Activated CD8-positive, alpha-beta memory T cell treated with anti-CD3 and anti-CD28 coated beads, Interleukin-2, amount 10 ng/mL, durations not matched to agents 7 days and 5 days (primary cell): ENCODE measurements at regions of chr16 and their contacts with region 1.

Region 1: DNA sequence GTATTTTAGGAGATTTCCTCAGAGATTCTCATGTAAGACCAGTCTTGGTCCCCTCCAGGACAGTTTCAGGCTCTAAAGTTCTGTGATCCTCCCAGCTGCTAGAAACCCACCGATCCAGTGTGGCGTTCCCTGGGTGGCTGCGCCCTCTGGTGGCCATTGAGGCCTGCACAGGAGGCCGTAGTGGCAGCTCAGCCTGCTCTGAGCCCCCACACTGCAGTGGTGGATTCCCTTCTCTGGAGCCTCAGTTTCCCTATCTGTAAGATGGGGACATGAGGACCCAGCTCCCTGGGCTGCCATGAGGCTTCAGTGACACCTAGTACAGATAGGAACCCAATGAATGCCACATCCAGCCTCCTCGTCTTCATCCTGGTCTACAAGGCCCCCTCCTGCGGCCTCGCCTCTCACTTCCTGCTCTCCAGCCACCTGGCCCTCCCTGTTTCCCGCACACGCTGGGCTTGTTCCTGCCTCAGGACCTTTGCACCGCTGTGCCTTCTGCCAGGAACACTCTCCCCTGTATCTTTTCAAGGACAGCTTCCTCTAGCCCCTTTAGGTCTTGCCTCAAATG is 16.5 kb downstream of the CCDC102A start:
- DNase-seq: peak; percentile 86
- ATAC-seq: peak; percentile 96
- H3K4me3 Mint-ChIP-seq: no peak overlapping the region
- H3K27ac Mint-ChIP-seq: peak overlapping the region; percentile 8
- H3K4me1 Mint-ChIP-seq: peaks cover 11% of the 10 kb centered on the region
- H3K27me3 Mint-ChIP-seq: no peaks in the 10 kb centered on the region

Region 2: GRCh38 chr16:57416122-57416509 is 103.8 kb before region 1 on chr16:
- CTCF ChIA-PET with region 1: interaction called, 74 read pairs
- DNase-seq: no peak
- ATAC-seq: no peak
- H3K4me3 Mint-ChIP-seq: no peak overlapping the region
- H3K27ac Mint-ChIP-seq: no peak overlapping the region
- H3K4me1 Mint-ChIP-seq: peaks cover 19% of the 10 kb centered on the region
- H3K27me3 Mint-ChIP-seq: no peaks in the 10 kb centered on the region

Region 3: DNA sequence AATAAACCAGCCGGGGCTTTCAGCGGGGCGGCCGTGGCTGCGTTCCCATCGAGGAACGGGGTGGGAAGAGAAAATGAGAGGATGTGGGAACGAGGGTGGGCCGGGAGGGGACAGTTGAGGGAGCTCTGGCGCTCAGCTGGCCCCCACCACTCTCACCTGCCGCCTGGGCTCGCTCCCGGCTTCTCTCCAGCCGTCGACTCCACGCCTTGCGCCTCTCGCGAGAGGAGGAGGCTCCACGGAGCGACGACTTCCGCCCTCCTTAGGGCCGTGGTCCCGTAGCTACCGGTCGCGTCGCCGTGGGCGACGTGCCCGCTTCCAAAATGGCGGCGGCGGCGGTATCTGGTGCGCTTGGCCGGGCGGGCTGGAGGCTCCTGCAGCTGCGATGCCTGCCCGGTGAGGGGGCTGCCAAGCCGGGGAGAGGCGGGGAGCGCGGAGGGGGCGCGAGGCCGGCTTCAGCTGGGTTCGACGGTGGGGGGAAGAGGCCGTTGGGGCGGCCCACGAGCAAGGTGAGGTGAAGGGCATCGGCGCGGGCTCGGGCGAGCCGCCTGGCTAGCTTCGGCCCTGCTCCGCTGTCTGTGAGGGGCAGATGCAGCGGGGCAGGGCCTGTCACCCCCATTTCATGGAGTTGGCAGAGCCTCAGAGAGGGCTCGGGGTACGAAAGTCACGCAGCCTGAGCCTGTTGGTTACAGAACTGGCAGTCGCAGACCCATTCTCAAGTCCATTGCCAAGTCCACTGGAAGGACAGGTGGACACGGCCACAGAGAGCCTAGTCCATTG is 72.5 kb before region 1 on chr16 and contains the starts of genes CIAPIN1 and COQ9:
- CTCF ChIA-PET with region 1: interaction called, 21 read pairs
- DNase-seq: peak; percentile 97
- ATAC-seq: peak; percentile 100
- H3K4me3 Mint-ChIP-seq: peak within 1 kb of the TSS; percentile 94
- H3K27ac Mint-ChIP-seq: peak within 1 kb of the TSS; percentile 86
- H3K4me1 Mint-ChIP-seq: peaks cover 37% of the 10 kb centered on the region
- H3K27me3 Mint-ChIP-seq: no peaks in the 10 kb centered on the region
- total RNA-seq, gene CIAPIN1: 46.5 to 62.5 TPM
- total RNA-seq, gene COQ9: 36.8 to 43.1 TPM

Region 4: DNA sequence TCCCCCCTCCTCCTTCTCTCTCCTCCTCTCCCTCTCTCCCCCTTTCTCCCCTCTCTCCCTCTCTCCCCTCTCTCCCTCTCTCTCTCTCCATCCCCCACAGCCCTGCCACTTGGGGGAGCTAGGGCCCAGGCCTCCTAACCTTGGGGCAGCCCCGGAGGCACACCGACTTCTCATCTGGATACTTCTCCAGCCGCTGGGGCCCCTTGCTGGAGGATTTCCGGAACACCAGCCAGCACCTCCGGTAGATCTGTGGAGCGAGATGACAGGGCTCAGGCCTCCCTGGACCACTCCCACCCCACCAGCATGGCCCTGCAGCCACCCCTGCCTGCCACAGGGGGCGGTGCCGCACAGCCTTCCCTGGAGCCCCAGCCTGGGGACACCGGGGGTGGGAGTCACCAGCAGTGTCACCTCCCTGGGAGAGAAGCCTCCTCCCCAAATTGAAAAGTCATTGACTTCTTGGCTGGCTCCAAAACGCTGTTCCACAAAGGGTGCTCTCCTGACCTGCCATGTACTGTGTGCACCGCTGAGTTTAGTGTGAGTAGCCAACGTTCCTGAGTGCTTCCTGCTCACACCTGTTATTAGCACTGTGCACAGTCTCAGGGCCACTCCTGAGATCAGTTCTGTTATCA is 44.1 kb before region 1 on chr16:
- CTCF ChIA-PET with region 1: interaction called, 22 read pairs
- DNase-seq: peak; percentile 93
- ATAC-seq: peak; percentile 99
- H3K4me3 Mint-ChIP-seq: peak overlapping the region; percentile 45
- H3K27ac Mint-ChIP-seq: peak overlapping the region; percentile 73
- H3K4me1 Mint-ChIP-seq: peaks cover 16% of the 10 kb centered on the region
- H3K27me3 Mint-ChIP-seq: no peaks in the 10 kb centered on the region

Region 5: DNA sequence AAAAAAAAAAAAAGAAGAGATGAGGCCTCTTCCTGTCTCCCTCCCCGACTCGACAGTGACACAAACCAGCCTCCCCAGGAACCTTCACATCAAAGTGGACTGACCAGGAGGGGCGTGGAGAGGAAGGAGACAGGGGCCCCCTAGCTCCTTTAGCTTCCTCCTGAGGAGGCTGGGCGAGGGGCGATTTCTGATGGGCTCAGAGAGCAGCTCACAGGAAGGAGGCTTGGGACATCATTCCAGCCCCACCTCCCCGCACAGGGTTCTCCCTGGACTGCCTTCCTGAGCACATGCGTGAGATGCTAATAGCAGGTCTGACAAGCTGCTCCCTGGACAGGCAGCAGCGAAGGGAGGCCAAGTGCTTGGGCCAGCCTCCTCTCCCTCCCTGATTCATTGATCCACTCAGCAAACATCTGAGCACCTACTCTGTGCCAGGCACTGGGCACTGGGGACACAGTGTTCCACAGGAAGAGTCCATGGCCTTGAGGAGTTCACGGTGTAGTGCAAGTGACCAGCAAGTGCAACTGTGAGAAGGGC is 19.2 kb before region 1 on chr16:
- CTCF ChIA-PET with region 1: interaction called, 13 read pairs
- DNase-seq: peak; percentile 54
- ATAC-seq: peak; percentile 71
- H3K4me3 Mint-ChIP-seq: no peak overlapping the region
- H3K27ac Mint-ChIP-seq: no peak overlapping the region
- H3K4me1 Mint-ChIP-seq: peaks cover 12% of the 10 kb centered on the region
- H3K27me3 Mint-ChIP-seq: no peaks in the 10 kb centered on the region

Region 6: DNA sequence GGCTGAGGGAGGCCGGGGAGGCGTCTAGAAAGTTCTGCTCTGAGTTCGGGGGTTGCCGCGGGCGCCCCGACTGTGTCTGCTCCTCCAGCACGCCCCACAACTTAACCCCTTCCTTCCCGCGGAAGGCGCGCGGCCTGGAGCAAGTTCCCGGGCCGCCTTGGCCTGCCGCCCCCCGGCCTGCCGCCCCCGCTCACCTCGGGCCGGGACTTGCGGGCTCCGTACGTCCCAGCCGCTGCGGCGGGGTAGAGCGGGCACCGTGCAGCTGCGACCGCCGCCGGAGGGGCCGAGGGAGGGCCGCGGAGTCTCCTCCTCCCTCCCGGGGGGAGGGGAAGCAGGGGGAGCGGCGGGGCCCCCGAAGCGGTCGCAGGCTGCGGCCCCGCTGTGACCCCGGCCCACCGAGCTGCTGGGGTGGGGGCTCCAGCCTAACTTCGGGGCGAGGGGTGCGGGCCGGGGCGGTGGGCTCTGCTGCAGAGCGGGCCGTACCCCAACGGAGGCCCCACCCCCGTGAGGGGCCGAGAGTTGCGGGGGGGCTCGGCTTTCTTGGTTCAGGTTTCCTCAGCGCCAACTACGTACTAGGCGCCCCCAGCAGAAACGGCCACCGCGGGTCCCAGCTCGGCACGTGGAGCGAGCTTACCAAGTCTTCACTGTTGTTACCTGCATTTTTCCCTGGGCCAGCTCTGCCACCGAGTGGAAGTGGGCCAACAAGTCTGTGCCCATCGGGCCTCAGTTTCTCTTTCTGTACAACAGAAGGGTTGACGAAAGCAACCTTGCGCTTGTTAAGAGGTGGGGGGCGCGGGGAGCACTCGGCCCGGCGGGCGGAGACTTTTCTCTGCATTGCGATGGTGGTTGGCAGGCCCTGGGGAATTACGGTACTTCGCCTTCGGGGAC is 16.7 kb after region 1 on chr16 and contains the start of gene CCDC102A:
- CTCF ChIA-PET with region 1: interaction called, 15 read pairs
- DNase-seq: peak; percentile 74
- ATAC-seq: peak; percentile 38
- H3K4me3 Mint-ChIP-seq: peak within 1 kb of the TSS; percentile 84
- H3K27ac Mint-ChIP-seq: peak within 1 kb of the TSS; percentile 90
- H3K4me1 Mint-ChIP-seq: peaks cover 79% of the 10 kb centered on the region
- H3K27me3 Mint-ChIP-seq: no peaks in the 10 kb centered on the region
- total RNA-seq, gene CCDC102A: 19.7 to 20.2 TPM

Region 7: DNA sequence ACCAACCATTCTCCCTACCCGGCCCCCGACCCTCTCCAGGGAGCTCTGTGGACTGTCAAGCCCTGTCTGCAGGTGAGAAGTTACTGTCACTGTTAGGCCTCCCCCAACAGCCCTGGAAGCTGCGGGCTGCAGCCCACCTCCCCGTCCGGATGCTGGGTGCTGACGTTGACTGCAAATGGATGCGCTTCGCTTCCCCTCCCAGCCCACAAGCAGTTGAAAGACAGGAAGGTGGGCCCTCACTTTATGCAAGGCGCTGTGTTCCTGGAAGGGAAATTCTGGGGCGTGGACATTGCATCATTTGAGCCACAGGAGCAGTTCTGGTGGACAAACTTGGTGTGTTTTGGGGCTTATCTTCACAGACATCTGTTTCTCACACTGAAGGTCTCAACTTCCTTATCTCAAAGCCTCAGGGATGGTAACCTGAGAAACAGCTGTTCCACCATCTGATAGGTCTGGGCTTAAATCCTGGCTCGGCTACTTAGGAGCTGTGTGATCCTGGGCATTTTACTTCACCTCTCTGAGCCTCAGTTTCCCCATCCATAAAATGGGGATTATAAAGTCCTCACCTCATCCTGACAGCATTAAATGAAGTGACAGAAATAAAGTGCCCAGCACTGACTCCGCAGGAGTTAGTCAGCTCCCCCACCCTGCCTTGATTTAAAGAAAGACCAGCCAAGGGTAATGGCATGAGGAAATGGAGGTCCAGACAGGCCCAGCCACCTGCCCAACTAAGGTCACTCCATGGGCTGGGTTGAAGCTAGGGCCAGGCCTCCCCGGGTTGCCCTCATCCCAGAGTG is 170.1 kb after region 1 on chr16:
- CTCF ChIA-PET with region 1: no interaction called
- DNase-seq: peak; percentile 82
- ATAC-seq: peak; percentile 83
- H3K4me3 Mint-ChIP-seq: peak overlapping the region; percentile 33
- H3K27ac Mint-ChIP-seq: peak overlapping the region; percentile 88
- H3K4me1 Mint-ChIP-seq: peaks cover 36% of the 10 kb centered on the region
- H3K27me3 Mint-ChIP-seq: peaks cover 2% of the 10 kb centered on the region